Naive thymus-derived CD4-positive, alpha-beta T cell (primary cell): ENCODE measurements at regions of chr17 and their contacts with region 1.

Region 1: GRCh38 chr17:40113110-40113906 is 8.5 kb upstream of the MSL1 start:
- DNase-seq: peak; percentile 69 to 95 (median 93)
- ATAC-seq: peak; percentile 89
- H3K4me3 ChIP-seq: peak overlapping the region; percentile 58
- H3K4me3 Mint-ChIP-seq: peak overlapping the region; percentile 75 to 98 (median 85)
- H3K27ac ChIP-seq: peak overlapping the region; percentile 69
- H3K27ac Mint-ChIP-seq: peak overlapping the region; percentile 57 to 100 (median 91)
- H3K4me1 ChIP-seq: peaks cover 52 to 55% of the 10 kb centered on the region in 2 donors
- H3K4me1 Mint-ChIP-seq: peaks cover 41 to 67% (median 56%) of the 10 kb centered on the region in 7 donors
- H3K27me3 ChIP-seq: no peaks in the 10 kb centered on the region
- H3K27me3 Mint-ChIP-seq: no peaks in the 10 kb centered on the region

Region 2: GRCh38 chr17:39972271-39972670 is 141.0 kb before region 1 on chr17:
- CTCF ChIA-PET with region 1: no interaction called
- POLR2A ChIA-PET with region 1: no interaction called
- intact Hi-C with region 1: no loop called
- DNase-seq: no peak
- ATAC-seq: peak; percentile 57
- H3K4me3 ChIP-seq: no peak overlapping the region
- H3K4me3 Mint-ChIP-seq: no peak overlapping the region
- H3K27ac ChIP-seq: no peak overlapping the region
- H3K27ac Mint-ChIP-seq: no peak overlapping the region
- H3K4me1 ChIP-seq: no peaks in the 10 kb centered on the region
- H3K4me1 Mint-ChIP-seq: peaks cover 0 to 2% (median under 1%) of the 10 kb centered on the region in 7 donors
- H3K27me3 ChIP-seq: no peaks in the 10 kb centered on the region
- H3K27me3 Mint-ChIP-seq: peaks cover 0 to 39% (median 7%) of the 10 kb centered on the region in 5 donors

Region 3: DNA sequence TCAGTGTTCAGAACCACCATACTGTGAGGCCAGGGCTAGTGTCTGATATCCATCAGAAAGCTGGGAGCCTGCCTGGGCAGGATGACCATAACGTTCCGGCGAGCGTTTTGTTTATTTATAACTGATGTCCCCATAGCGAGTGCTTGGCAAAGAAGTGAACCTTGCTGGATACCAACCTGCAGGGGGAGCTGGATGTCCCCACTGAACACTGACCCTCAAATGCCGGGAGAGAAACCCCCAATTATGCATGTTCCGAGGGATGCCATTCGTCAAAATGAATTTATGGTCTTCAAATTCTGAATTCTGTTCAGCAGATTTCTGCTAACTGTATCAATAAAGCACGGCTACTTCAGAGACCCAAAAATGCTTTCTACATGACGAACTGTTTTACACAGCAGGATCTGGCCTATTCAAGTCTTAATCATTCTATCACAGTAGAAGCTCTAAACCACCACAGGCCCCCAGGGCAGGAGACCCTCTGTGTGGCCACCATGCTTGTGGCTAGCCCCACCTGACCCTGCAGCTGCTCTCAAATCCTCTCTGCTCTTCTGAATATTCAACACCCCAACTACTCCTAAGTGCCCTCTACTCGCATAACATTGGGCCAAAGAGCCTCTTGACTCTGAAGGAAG is 74.3 kb before region 1 on chr17:
- CTCF ChIA-PET with region 1: interaction called, 6 read pairs
- POLR2A ChIA-PET with region 1: no interaction called
- intact Hi-C with region 1: loop called in 1 of 2 experiments (anchors 1 kb)
- DNase-seq: no peak
- ATAC-seq: no peak
- H3K4me3 ChIP-seq: no peak overlapping the region
- H3K4me3 Mint-ChIP-seq: no peak overlapping the region
- H3K27ac ChIP-seq: no peak overlapping the region
- H3K27ac Mint-ChIP-seq: peak overlapping the region in 3 of 9 donors; percentile 22 to 64 (median 32)
- H3K4me1 ChIP-seq: no peaks in the 10 kb centered on the region
- H3K4me1 Mint-ChIP-seq: peaks cover 0 to 10% (median 7%) of the 10 kb centered on the region in 7 donors
- H3K27me3 ChIP-seq: no peaks in the 10 kb centered on the region
- H3K27me3 Mint-ChIP-seq: no peaks in the 10 kb centered on the region

Region 4: DNA sequence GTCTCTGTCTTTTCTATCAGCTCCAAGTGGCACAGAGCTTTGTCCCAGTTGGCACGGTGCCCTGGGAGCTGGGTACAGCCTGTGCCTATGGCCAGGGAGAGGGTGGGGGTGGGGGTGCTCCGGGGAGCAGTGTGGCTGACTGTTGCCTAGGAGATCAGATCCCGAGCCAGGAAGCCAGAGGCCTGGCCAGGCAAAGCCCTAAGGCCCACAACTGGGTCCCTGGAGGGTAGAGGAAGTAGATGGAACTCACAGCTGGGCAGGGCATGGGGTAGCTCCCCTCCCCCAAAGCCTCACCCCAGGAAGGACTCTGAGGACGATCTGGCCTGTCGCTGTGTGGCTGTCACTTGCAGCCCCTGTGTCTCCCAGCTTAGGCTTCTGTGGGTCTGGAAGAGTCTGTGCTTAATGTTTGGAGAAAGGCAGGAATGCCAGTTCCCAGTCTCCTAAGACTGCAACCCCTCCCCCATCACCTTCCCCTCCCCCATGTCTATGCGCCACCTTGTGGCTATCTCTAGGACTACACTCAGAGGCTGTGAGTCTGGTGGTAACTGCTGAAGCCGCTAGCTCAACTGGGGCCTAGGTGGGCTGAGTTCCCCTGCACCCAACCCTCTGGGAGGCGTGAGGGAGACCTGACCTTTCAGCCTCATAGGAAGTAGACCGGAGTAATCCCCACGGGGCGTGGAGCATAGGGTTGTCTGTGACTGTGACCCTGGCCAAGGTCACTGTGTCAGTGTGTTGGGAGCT is 37.9 kb before region 1 on chr17:
- CTCF ChIA-PET with region 1: interaction called, 127 read pairs
- POLR2A ChIA-PET with region 1: interaction called, 40 read pairs
- intact Hi-C with region 1: loop called (anchors 1 kb)
- DNase-seq: peak; percentile 45 to 80 (median 63)
- ATAC-seq: peak; percentile 93
- H3K4me3 ChIP-seq: no peak overlapping the region
- H3K4me3 Mint-ChIP-seq: peak overlapping the region in 8 of 10 donors; percentile 35 to 78 (median 71)
- H3K27ac ChIP-seq: peak overlapping the region; percentile 18
- H3K27ac Mint-ChIP-seq: peak overlapping the region in 8 of 9 donors; percentile 42 to 89 (median 68)
- H3K4me1 ChIP-seq: peaks cover 13 to 36% of the 10 kb centered on the region in 2 donors
- H3K4me1 Mint-ChIP-seq: peaks cover 7 to 67% (median 36%) of the 10 kb centered on the region in 7 donors
- H3K27me3 ChIP-seq: no peaks in the 10 kb centered on the region
- H3K27me3 Mint-ChIP-seq: no peaks in the 10 kb centered on the region

Region 5: DNA sequence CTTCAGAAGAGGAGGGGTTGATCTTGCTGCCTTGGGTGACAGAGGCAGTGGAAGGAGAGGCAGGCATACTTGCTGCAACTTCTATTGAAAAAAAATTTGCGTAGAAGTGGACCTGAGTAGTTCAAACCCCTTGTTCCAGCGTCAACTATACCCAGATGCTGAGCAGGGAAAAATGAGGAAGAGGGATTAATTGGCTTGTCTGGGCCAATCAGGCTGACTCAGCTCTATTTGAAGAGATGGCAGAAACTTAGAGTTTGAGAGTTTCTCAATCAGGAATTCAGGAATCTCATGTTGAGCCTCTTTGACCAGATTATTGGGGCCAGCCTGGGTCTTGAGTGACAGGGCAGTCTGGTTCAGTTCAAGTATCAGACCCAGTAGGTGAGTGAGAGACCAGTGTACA is 44.7 kb after region 1 on chr17:
- CTCF ChIA-PET with region 1: interaction called, 11 read pairs
- POLR2A ChIA-PET with region 1: interaction called, 4 read pairs
- intact Hi-C with region 1: no loop called
- DNase-seq: no peak
- ATAC-seq: no peak
- H3K4me3 ChIP-seq: no peak overlapping the region
- H3K4me3 Mint-ChIP-seq: peak overlapping the region in 1 of 10 donors; percentile 11
- H3K27ac ChIP-seq: no peak overlapping the region
- H3K27ac Mint-ChIP-seq: peak overlapping the region in 7 of 9 donors; percentile 29 to 89 (median 65)
- H3K4me1 ChIP-seq: peaks cover 0 to 5% of the 10 kb centered on the region in 2 donors
- H3K4me1 Mint-ChIP-seq: peaks cover 10 to 42% (median 25%) of the 10 kb centered on the region in 7 donors
- H3K27me3 ChIP-seq: no peaks in the 10 kb centered on the region
- H3K27me3 Mint-ChIP-seq: no peaks in the 10 kb centered on the region

Region 6: GRCh38 chr17:40191237-40192208 is 78.2 kb after region 1 on chr17:
- CTCF ChIA-PET with region 1: interaction called, 56 read pairs
- POLR2A ChIA-PET with region 1: interaction called, 8 read pairs
- intact Hi-C with region 1: loop called (anchors 1 kb)
- DNase-seq: peak; percentile 36 to 73 (median 52)
- ATAC-seq: peak; percentile 92
- H3K4me3 ChIP-seq: peak overlapping the region; percentile 63
- H3K4me3 Mint-ChIP-seq: peak overlapping the region; percentile 88 to 97 (median 94)
- H3K27ac ChIP-seq: peak overlapping the region; percentile 29
- H3K27ac Mint-ChIP-seq: peak overlapping the region in 4 of 9 donors; percentile 22 to 58 (median 36)
- H3K4me1 ChIP-seq: peaks cover 0 to 3% of the 10 kb centered on the region in 2 donors
- H3K4me1 Mint-ChIP-seq: peaks cover 0 to 27% (median 13%) of the 10 kb centered on the region in 7 donors
- H3K27me3 ChIP-seq: no peaks in the 10 kb centered on the region
- H3K27me3 Mint-ChIP-seq: peaks cover 0 to 4% (median 0%) of the 10 kb centered on the region in 5 donors

Region 7: DNA sequence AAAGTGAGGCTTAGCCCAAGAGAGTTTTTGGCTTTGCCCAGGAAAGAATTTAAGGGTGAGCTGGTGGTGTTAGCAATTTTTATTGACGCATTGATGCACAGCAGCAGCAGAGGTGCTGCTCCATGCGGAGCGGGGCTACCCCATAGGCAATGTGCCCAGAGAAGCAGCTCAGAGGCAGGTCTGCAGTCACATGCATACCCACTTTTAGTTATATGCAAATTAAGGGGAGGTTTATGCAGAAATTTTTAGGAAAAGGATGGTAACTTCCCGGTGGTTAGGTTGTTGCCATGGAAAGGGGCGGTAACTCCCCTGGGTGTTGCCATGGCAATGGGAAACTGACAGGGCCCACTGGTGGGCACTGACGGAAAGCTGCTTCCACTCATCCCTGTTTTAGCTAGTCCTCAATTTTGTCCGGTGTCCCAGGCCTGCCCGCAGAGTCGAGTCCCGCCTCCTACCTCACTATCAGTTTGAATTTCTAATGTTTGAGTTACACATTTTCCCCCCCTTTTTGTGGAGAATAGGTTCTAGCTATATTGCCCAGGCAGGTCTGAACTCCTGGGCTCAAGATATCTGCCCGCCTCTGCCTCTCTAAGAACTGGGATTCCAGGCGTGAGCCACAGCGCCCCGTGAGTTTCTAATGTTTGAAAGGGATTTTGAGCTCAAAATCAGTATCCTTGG is 261.7 kb after region 1 on chr17:
- CTCF ChIA-PET with region 1: no interaction called
- POLR2A ChIA-PET with region 1: no interaction called
- intact Hi-C with region 1: no loop called
- DNase-seq: no peak
- ATAC-seq: no peak
- H3K4me3 ChIP-seq: no peak overlapping the region
- H3K4me3 Mint-ChIP-seq: no peak overlapping the region
- H3K27ac ChIP-seq: no peak overlapping the region
- H3K27ac Mint-ChIP-seq: peak overlapping the region in 1 of 9 donors; percentile 11
- H3K4me1 ChIP-seq: no peaks in the 10 kb centered on the region
- H3K4me1 Mint-ChIP-seq: peaks cover 4 to 24% (median 5%) of the 10 kb centered on the region in 7 donors
- H3K27me3 ChIP-seq: no peaks in the 10 kb centered on the region
- H3K27me3 Mint-ChIP-seq: peaks cover 0 to 5% (median 4%) of the 10 kb centered on the region in 5 donors